Upper lobe of right lung (tissue), 1 donor: ENCODE measurements at regions of chr22 and their contacts with region 1.

Region 1: DNA sequence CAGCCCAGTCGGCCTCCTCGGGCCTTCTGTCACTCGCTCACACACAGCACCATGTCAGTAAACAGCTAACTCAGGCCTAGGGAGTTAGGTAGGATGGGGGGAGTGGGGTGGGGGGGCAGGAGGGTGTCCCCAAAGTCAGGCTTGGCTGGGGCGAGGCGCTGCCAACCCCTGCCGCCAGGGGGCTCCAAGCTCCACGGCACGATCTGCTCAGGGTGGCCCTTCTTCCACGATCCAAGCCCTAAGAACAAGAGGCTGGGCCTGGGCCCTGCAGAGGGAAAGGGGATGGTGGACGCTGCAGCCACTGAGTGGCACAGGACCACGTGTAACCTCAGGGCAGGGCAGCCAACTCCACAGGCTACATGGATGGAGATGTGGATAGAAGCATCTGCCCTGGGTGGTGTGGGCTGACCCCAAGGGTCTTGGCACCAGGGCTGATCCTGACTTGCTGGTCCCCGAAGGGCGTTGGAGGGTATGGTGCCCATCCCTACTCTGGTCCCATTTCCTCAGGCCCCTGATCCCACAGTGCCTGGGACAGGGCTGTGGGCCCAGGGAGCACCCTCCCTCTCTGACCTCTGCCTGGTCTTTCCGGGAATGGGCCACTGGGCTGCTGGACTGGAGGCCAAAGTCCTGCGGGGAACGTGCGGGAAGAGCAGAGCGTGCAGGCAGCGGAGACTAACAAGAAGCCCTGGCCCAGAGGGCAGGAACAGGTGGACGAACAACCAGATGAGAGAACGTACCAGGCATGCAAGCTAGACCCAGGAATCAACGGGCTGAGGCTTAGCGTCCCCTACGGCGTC is 29.1 kb upstream of the TXNRD2 start:
- DNase-seq: peak; percentile 87
- ATAC-seq: peak; percentile 76
- H3K4me3 ChIP-seq: no peak overlapping the region
- H3K27ac ChIP-seq: no peak overlapping the region
- H3K4me1 ChIP-seq: peaks cover 9% of the 10 kb centered on the region
- H3K27me3 ChIP-seq: no peaks in the 10 kb centered on the region
- CTCF ChIP-seq: peak; percentile 95

Region 2: GRCh38 chr22:19766511-19767426 is 203.9 kb before region 1 on chr22:
- intact Hi-C with region 1: no loop called
- DNase-seq: peak; percentile 86
- ATAC-seq: peak; percentile 73
- H3K4me3 ChIP-seq: peak overlapping the region; percentile 37
- H3K27ac ChIP-seq: peak overlapping the region; percentile 47
- H3K4me1 ChIP-seq: peaks cover 12% of the 10 kb centered on the region
- H3K27me3 ChIP-seq: peaks cover 90% of the 10 kb centered on the region
- CTCF ChIP-seq: peak; percentile 35

Region 3: DNA sequence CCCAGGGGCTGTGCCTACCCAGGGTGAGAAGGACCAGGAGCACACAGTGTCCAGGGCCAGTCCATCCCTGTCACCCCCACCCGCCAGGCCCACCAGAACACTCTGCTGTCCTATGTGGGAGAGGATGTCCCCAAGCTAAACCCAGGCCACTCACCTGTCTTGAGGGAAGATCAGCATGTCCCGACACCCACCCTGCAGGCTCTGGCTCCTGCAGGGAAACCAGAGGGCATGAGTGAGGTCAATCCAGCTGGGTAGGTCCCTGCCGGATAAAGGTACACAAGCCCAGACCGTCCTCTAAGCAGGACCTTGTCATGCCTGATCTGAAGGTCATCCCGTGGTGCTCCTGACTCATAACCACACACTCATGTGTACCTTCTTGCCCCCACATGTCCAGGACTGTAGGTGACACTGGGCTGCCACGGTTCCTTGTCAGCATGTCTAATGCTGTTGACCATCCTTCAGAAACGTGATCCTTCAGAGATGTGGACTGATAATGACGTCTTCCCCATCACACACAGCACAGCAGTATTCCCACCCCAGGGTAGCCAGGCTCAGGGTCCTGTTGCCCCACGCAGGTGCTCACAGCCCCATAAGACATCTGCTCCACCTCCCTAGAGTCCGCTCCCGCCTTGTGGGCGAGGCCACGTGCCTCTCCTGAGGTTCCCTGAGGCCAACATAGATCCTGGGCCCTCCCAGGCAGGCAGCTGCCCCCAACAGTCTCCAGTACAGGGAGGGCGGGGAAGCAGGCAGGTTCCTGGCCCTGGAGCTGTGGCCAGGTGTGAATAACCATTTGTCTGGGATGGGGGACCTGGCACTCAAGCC is 39.8 kb after region 1 on chr22:
- intact Hi-C with region 1: loop called (anchors 2 kb)
- DNase-seq: no peak
- ATAC-seq: no peak
- H3K4me3 ChIP-seq: no peak overlapping the region
- H3K27ac ChIP-seq: no peak overlapping the region
- H3K4me1 ChIP-seq: peaks cover 5% of the 10 kb centered on the region
- H3K27me3 ChIP-seq: no peaks in the 10 kb centered on the region
- CTCF ChIP-seq: no peak

Region 4: DNA sequence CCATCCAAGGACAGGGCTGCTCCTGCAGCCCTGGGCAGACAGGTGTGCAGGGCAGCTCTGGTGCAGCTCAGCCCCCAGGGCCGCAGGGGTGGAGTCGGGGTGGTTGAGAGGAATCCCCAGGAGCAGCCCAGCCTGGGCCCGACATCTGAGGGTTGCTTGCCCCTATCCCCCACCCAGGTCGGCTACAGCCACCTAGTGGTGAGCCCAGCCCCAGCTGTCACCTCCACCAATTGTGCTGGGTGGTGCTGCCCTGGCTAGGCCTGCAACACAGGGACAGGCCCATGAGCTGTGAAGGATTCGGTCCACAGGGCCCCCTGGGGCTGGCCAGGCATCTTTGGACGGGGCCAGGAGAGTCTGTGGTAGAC is 267.8 kb after region 1 on chr22:
- intact Hi-C with region 1: no loop called
- DNase-seq: peak; percentile 84
- ATAC-seq: peak; percentile 69
- H3K4me3 ChIP-seq: no peak overlapping the region
- H3K27ac ChIP-seq: peak overlapping the region; percentile 66
- H3K4me1 ChIP-seq: peaks cover 22% of the 10 kb centered on the region
- H3K27me3 ChIP-seq: no peaks in the 10 kb centered on the region
- CTCF ChIP-seq: peak; percentile 53